ENCODE measurements at regions of chr11 and their contacts with region 1.

Region 1: DNA sequence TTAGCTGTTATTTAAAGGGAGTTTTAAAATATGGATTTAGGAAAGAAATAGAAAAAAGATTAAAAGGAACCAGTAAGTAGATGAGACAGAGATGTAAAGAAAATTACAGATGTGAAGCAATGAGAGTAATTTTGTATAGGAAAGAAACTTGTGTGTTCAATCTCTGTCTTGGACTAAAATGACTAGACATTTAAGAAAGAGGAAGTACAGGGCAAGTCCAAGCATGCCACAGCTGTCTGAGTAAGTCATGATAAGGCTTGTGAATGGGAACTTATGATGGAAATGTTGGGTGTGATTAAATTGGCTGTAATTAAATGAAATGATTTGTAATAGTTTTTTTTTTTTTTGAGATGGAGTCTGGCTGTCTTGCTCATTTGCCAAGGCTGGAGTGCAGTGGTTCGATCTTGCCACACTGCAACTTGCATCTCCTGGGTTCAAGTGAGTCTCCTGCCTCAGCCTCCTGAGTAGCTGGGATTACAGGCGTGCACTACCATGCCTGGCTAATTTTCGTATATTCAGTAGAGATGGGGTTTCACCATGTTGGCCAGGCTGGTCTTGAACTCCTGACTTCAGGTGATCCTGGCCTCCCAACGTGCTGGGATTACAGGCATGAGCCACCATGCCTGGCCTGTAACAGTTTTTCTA is 5.9 kb upstream of the ACY3 start:
- DNase-seq: peak; percentile 46
- H3K4me3 ChIP-seq: no peak overlapping the region
- H3K27ac ChIP-seq: no peak overlapping the region
- H3K4me1 ChIP-seq: no peaks in the 10 kb centered on the region
- H3K27me3 ChIP-seq: no peaks in the 10 kb centered on the region
- CTCF ChIP-seq: no peak
- POLR2A ChIP-seq: no peak

Region 2: GRCh38 chr11:67613960-67614715 is 42.3 kb before region 1 on chr11:
- CTCF ChIA-PET with region 1: interaction called, 11 read pairs
- POLR2A ChIA-PET with region 1: no interaction called
- dilution Hi-C with region 1: no loop called
- intact Hi-C with region 1: no loop called
- DNase-seq: peak; percentile 25
- H3K4me3 ChIP-seq: no peak overlapping the region
- H3K27ac ChIP-seq: no peak overlapping the region
- H3K4me1 ChIP-seq: no peaks in the 10 kb centered on the region
- H3K27me3 ChIP-seq: peaks cover 14 to 21% of the 10 kb centered on the region in 2 experiments
- CTCF ChIP-seq: peak; percentile 63 to 92
- POLR2A ChIP-seq: no peak

Region 3: DNA sequence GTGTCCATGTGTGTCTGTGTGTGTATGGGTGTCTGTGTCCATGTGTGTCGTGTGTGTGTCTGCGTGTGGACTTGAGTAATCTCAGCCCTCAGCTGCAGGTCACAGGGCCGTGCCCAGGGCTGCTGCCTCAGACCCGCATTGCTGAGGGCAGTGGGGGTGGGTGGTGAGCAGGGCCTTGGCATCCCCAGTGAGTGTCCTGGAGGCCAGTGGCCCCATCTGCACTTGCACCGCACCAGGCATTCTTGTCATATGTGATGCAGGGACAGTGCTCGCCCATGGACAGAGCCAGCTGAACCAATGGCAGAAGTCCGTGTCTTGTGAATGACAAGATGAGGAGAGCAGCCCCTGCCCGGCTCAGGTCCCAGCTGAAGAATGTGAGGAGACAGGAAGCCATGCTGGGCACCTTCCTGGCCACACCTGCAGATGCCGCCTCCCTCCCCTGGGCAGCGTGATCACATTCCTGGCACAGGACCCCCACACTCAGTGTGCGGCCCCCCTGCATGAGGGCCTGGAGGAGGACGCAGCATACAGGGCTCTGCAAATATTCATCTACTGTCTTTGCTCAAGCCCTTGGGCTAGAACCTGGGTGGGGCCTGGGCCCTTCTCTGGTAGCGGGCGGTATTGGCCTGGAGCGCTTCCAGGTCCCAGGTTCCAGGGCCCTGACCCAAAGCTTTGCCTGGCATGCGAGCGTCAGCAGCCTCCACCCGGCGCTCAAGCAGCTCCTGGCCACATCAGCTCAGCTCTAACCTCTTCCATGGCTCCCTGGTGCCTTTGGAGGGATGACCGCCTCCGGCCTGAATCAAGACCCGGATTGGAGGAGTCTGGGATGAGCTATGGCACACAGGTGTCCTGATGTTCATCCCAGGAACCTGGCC is 14.2 kb after region 1 on chr11:
- CTCF ChIA-PET with region 1: interaction called, 11 read pairs
- POLR2A ChIA-PET with region 1: no interaction called
- dilution Hi-C with region 1: no loop called
- intact Hi-C with region 1: no loop called
- DNase-seq: no peak
- H3K4me3 ChIP-seq: no peak overlapping the region
- H3K27ac ChIP-seq: no peak overlapping the region
- H3K4me1 ChIP-seq: no peaks in the 10 kb centered on the region
- H3K27me3 ChIP-seq: peaks cover 0 to 2% of the 10 kb centered on the region in 2 experiments
- CTCF ChIP-seq: no peak
- POLR2A ChIP-seq: no peak

Measured in endothelial cell of umbilical vein (primary cell).